ENCODE measurements at regions of chr11 and their contacts with region 1.

Region 1: GRCh38 chr11:43765194-43765593 is 84.7 kb downstream of the HSD17B12 start:
- DNase-seq: no peak
- CTCF ChIP-seq: no peak

Region 2: DNA sequence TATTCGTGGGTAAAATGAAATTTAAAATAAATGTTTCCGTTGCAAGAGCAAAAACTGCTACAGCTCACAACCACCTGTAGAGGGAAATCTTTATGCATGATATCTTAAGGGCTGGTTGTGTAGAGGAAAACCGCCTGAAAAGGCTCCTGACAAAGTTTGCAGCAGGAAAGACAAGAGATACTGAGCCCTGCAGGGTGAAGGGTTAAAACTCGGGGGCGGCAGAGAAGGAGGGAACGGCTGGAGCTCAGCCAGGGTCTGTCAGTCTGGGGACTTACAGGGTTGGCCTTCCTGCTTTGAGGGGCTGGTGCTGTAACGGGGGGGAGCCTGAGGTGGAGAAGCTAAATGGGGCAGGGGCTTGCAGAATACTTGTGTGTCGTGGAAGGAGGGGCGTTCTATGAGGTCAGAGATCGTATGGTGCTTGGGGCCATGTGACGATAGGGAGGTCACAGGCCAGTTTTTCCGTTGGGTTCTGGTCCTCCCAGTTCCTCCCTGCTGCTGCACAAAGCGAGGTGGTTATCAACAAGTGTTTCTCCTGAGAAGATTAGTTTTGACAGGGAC is 207.6 kb before region 1 on chr11:
- CTCF ChIA-PET with region 1: no interaction called
- POLR2A ChIA-PET with region 1: no interaction called
- DNase-seq: no peak
- CTCF ChIP-seq: no peak

Region 3: GRCh38 chr11:43601511-43601910 is 163.7 kb before region 1 on chr11:
- CTCF ChIA-PET with region 1: no interaction called
- POLR2A ChIA-PET with region 1: interaction called, 10 read pairs
- DNase-seq: no peak
- CTCF ChIP-seq: no peak

Region 4: DNA sequence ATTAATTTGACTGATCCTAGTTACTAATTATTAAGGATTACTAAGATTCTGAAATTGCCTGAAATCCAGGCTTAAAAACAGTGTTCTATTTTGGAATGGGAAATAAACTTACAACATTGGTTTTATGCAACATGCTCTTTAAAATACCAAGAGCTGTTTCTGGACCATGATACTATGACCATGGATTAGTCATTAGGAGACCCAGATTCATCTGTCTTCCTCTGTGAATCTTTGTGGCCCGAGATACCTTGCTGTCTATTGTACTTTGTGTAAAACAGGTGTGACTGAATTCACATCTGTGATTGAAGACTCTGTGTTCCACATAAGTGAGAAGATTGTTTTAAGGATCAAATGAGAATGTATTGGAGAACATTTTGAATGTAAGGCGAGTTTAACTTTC is 14.1 kb after region 1 on chr11:
- CTCF ChIA-PET with region 1: no interaction called
- POLR2A ChIA-PET with region 1: no interaction called
- DNase-seq: no peak
- CTCF ChIP-seq: no peak